ENCODE measurements at regions of chr18 and their contacts with region 1.

Region 1: DNA sequence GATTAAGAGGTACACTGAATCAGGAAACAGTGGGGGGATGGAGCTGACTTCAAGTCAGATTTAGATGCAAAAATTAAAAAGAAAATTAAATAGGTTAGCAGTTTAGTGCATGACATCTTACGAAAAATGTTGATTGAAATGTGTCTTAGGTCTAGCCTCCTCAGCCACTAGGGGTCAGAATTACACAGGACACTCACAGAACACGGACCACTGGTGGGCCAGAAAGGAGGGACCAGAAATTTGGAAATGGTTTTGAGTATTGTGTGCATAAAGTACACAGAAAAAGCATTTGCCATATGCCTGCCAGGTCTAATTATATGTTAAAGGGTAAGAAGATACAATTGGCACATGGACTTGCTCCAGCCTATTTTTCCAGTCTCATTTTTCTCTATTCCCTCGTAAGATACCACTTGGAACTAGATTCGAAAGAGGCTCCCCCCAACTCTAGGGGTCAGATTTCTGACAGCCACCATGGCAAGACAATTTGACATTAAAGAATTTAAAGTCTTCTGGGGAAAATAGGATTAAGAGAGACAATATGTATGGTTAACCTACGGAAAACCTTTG is 550.2 kb upstream of the SETBP1 start:
- DNase-seq: peak; percentile 59
- H3K4me3 Mint-ChIP-seq: no peak overlapping the region
- H3K27ac Mint-ChIP-seq: no peak overlapping the region
- H3K4me1 Mint-ChIP-seq: peaks cover 19% of the 10 kb centered on the region
- H3K27me3 Mint-ChIP-seq: no peaks in the 10 kb centered on the region
- CTCF ChIP-seq: peak; percentile 78

Region 2: DNA sequence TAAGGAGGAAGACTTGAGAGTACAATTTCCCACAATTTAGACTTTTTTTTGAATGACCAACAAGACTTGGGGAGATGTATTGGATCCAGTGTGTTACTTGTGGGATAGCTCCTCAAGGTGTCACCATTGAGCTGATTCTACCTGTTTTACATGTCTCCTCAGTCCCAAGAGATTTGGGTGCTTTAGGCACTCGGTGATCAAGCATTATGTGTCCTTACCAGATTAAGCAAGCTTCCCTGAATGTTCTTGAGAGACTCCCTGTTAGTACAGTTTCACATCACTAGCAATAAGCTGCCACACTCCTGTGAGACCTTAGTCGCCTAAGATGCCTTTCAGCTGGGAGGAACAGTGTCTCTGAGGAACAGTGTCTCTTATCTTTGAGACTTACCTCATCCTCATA is 468.9 kb before region 1 on chr18:
- CTCF ChIA-PET with region 1: interaction called, 4 read pairs
- intact Hi-C with region 1: loop called (anchors 5 kb)
- DNase-seq: peak; percentile 61
- H3K4me3 Mint-ChIP-seq: no peak overlapping the region
- H3K27ac Mint-ChIP-seq: peak overlapping the region; percentile 70
- H3K4me1 Mint-ChIP-seq: peaks cover 17% of the 10 kb centered on the region
- H3K27me3 Mint-ChIP-seq: no peaks in the 10 kb centered on the region
- CTCF ChIP-seq: peak; percentile 58

Region 3: DNA sequence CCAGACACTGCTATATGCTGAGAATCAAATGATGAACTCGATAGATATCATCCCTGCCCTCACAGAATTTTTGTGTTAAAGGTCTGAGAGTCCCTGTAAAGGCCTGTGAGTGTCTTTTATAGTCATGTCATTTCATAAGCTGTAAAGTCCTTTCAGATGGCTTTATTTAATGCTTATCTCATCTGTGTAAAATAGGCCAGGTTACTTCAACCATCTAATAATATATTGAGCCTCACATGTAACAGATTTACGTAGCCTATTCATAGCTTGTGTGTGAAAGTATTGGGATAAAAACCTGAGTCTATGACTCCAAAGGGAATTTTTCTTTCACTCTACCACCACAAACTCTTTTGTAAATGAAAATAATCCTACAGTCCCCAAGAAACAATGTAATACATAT is 181.2 kb before region 1 on chr18:
- CTCF ChIA-PET with region 1: no interaction called
- intact Hi-C with region 1: no loop called
- DNase-seq: no peak
- H3K4me3 Mint-ChIP-seq: no peak overlapping the region
- H3K27ac Mint-ChIP-seq: no peak overlapping the region
- H3K4me1 Mint-ChIP-seq: no peaks in the 10 kb centered on the region
- H3K27me3 Mint-ChIP-seq: no peaks in the 10 kb centered on the region
- CTCF ChIP-seq: no peak

Region 4: GRCh38 chr18:44079606-44080005 is 50.9 kb before region 1 on chr18:
- CTCF ChIA-PET with region 1: no interaction called
- intact Hi-C with region 1: loop called (anchors 5 kb)
- DNase-seq: peak; percentile 35
- H3K4me3 Mint-ChIP-seq: peak overlapping the region; percentile 39
- H3K27ac Mint-ChIP-seq: peak overlapping the region; percentile 87
- H3K4me1 Mint-ChIP-seq: peaks cover 39% of the 10 kb centered on the region
- H3K27me3 Mint-ChIP-seq: no peaks in the 10 kb centered on the region
- CTCF ChIP-seq: no peak

Region 5: DNA sequence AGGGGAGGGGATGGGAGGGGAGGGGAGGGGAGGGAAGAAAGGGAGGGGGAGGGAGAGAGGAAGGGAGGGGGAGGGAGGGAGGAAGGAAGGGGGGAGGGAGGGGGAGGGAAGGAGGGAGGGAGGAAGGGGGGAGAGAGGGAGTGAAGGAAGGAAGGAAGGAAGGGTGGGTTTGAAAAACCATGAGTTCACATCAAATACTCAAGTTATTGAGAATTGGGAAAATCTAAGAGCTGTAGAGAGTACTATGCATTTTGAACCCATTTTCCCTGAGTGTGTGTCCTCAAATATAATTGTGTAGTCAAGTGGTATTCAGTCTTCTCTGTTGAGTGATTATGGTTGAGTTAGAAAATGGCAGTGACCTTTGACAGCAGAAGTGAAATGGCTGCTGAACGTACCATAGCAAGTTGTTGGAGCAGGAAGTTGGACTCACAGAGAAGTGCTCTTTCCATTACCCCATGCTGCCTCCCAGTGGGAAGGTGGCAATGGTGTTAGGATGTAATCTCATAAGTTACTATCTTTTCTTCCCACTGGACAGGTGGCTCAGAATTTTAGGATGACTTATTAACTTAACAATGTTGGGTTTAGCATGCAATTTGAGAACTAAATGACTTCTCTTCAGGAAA is 764.8 kb after region 1 on chr18:
- CTCF ChIA-PET with region 1: no interaction called
- intact Hi-C with region 1: loop called (anchors 5 kb)
- DNase-seq: peak; percentile 61
- H3K4me3 Mint-ChIP-seq: no peak overlapping the region
- H3K27ac Mint-ChIP-seq: no peak overlapping the region
- H3K4me1 Mint-ChIP-seq: peaks cover 9% of the 10 kb centered on the region
- H3K27me3 Mint-ChIP-seq: no peaks in the 10 kb centered on the region
- CTCF ChIP-seq: no peak